ENCODE measurements at regions of chr17 and their contacts with region 1.

Region 1: GRCh38 chr17:47895856-47896671 is at the start of gene SP2:
- DNase-seq: peak; percentile 100
- H3K4me3 ChIP-seq: peak within 1 kb of the TSS; percentile 76 to 93 (median 86)
- H3K27ac ChIP-seq: peak within 1 kb of the TSS; percentile 98 to 99 (median 98)
- H3K4me1 ChIP-seq: peaks cover 0 to 33% (median 25%) of the 10 kb centered on the region in 4 donors
- H3K27me3 ChIP-seq: no peaks in the 10 kb centered on the region
- CTCF ChIP-seq: no peak
- EP300 ChIP-seq: no peak
- POLR2A ChIP-seq: peak; percentile 69 to 70
- total RNA-seq, gene SP2: 3.0 to 8.3 (median 5.6) TPM

Region 2: GRCh38 chr17:47941236-47941994 is 45.4 kb after region 1 on chr17 and contains the start of gene PNPO:
- intact Hi-C with region 1: loop called (anchors 2 kb)
- DNase-seq: peak; percentile 98
- H3K4me3 ChIP-seq: peak within 1 kb of the TSS; percentile 53 to 92 (median 77)
- H3K27ac ChIP-seq: peak within 1 kb of the TSS; percentile 79 to 86 (median 82)
- H3K4me1 ChIP-seq: peaks cover 0 to 26% (median 17%) of the 10 kb centered on the region in 4 donors
- H3K27me3 ChIP-seq: no peaks in the 10 kb centered on the region
- CTCF ChIP-seq: peak in 1 of 4 experiments; percentile 33
- EP300 ChIP-seq: no peak
- POLR2A ChIP-seq: peak in 1 of 2 donors; percentile 38
- total RNA-seq, gene PNPO: 14.3 to 16.5 (median 15.2) TPM

Region 3: DNA sequence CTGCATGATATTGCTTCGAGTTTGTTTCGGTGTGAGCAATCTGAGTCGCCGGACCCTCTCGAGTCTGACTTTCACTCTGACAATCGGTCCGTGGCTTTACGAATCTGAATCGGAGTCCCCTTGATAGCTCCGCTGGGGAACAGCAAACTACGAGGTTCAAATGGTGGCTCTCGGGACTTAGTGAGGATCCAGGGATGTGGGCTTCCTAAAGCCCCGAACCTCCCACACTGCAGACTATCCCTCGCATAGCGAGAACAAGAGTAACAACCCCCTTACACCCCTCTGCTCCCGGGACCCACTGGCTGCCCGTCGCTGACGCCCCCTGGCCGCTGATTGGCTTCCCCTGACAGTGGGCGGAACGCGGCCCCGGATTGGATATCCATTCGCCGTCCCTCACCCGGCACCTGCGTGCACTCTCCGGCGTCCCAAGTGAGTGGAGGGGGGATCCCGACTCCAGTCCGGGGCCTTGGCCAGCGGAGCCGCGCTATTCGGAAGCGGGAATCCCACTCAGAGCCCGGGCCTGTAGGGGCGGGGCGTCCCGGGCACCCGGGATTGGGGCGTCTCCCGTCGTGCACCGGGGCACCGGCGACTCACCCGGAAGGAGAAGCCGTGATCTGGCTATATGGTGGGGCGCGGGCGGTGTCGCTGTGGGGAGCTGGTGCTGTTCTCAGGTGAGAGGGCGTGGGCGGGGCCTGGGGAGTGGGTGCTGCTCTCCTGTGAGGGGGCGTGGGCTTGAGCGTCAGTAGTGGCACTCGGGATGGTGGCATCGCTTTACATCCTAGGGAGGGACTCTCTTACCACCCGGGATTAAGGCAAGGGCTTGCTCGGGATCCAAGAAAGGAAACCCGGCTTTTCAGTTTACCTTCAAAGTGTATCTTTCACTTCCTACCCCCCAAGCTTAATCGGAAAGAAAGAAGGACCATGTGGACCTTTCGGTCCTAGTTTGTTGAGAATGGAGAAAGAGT is 211.4 kb after region 1 on chr17 and contains the start of gene SNX11:
- intact Hi-C with region 1: no loop called
- DNase-seq: peak; percentile 94
- H3K4me3 ChIP-seq: peak within 1 kb of the TSS; percentile 74 to 86 (median 81)
- H3K27ac ChIP-seq: peak within 1 kb of the TSS; percentile 89 to 98 (median 95)
- H3K4me1 ChIP-seq: peaks cover 0 to 29% (median 18%) of the 10 kb centered on the region in 4 donors
- H3K27me3 ChIP-seq: no peaks in the 10 kb centered on the region
- CTCF ChIP-seq: no peak
- EP300 ChIP-seq: peak in 1 of 4 donors; percentile 24
- POLR2A ChIP-seq: peak; percentile 39 to 45
- total RNA-seq, gene SNX11: 10.0 to 19.3 (median 15.7) TPM

Region 4: DNA sequence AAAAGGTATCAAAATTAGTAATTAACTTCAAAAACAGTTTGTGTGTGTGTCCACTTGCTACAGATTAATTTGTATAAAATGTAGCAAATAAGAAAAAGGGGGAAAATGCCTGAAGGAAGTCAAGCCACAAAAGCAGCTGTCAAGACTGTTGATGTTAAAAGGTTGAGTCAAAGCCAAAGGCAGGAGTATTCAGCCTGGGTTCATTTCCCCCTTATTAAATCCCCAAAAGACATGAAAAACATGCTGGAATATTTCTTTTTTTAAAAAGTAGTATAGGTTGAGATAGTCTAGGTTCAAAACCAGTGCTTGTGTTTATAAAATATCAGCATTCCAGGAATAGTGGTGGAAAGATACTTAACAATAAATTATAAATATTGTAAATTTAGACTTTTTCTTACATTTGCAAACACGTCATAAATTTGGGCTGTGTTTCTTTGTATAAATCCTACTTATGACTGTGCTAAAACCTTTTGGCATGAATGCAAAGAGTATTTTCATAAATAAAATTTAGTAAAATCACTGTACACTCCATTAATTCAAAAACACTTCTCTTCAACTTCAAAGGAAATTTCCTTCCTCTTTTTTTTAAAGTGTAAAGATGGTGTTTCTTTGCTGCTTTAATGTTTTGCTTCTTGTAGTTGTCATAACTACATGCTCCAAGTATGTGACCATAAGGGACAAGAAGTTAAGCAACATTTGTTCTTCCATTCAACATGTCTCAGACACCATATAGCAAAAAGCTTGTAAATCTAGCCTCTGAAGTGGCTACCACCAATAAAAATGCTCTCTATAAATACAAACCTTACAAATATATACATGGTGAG is 461.9 kb after region 1 on chr17:
- intact Hi-C with region 1: no loop called
- DNase-seq: no peak
- H3K4me3 ChIP-seq: no peak overlapping the region
- H3K27ac ChIP-seq: no peak overlapping the region
- H3K4me1 ChIP-seq: no peaks in the 10 kb centered on the region
- H3K27me3 ChIP-seq: peaks cover 0 to 17% (median 6%) of the 10 kb centered on the region in 3 donors
- CTCF ChIP-seq: no peak
- EP300 ChIP-seq: no peak
- POLR2A ChIP-seq: no peak